ENCODE measurements at regions of chr9 and their contacts with region 1.

Region 1: GRCh38 chr9:107489687-107490605 is at the start of gene KLF4:
- DNase-seq: peak; percentile 96
- ATAC-seq: peak; percentile 79
- total RNA-seq, gene KLF4: 63.8 TPM

Region 2: DNA sequence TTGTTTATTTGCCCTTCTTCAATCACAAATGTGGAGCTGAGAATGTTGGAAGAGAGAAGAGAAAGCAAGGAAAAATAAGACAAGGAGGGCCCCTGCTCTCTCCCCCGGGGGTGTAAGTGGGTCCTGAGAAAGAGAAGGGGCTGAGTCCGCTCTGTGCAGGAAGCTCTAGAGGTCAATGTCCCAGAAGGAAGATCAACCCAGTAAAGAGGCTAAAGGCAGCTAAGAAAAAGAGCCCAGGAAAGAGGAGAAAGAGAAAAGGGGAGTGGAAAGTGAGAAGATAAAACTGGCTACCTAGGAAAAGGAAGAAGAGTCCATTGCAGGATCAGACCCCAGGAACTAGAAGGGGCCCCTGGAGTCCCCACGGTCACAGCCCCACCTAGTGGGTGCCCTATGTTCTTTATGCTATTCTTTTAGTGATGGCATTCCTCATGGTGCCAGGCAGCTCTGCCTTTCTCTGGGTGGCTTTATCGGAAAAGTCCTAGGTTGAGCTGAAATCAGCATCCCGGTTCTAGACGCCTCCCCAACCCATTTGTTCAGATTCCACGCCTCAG is 782.5 kb after region 1 on chr9:
- intact Hi-C with region 1: loop called (anchors 10 kb)
- DNase-seq: peak; percentile 69
- ATAC-seq: peak; percentile 88

Region 3: GRCh38 chr9:108761655-108762347 is 1271.9 kb after region 1 on chr9:
- intact Hi-C with region 1: loop called (anchors 10 kb)
- DNase-seq: peak; percentile 68
- ATAC-seq: peak; percentile 88